SK-N-SH (cell line): ENCODE measurements at regions of chr1 and their contacts with region 1.

Region 1: DNA sequence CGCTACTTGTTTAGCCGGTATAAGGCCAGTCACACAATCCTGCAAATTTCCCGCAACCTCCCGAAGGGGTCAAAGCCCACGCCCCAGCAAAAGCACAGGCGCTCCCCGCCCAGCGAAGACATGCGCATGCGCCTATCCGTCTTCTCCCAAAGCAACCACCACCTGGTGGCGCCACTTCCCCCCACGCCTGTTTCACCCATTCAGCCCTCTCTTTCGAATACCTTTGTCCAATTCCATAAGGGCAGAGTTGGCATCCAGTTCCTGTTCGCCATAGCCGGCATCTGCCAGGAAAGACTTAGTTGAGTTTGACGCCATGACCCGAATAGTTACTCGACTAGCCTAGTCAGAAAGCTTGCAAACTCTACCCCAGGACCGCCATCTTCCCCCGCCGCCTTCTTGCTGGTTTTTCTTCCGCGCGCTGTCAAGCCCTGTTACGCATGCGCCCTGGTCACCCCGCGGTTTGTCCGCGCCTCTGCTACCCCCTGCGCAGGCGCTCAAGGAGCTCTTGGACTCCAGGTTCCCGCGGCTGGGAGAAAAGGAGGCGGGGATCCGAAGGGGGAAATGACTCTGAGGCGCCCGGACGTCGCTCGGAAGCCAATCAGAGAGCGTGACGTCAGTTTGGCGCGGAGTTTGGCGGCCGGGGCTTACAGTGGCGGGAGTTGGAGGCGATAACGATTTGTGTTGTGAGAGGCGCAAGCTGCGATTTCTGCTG is at the starts of genes DTL and INTS7:
- DNase-seq: peak; percentile 94
- H3K4me3 ChIP-seq: peak within 1 kb of the TSS; percentile 89 to 99
- H3K27ac ChIP-seq: peak within 1 kb of the TSS; percentile 81 to 93
- H3K4me1 ChIP-seq: peaks cover 18 to 22% of the 10 kb centered on the region in 2 experiments; a peak in 3 of 4 replicates
- H3K27me3 ChIP-seq: no peaks in the 10 kb centered on the region
- CTCF ChIP-seq: peak; percentile 92
- EP300 ChIP-seq: peak in 1 of 2 experiments; percentile 27; a peak in 1 of 4 replicates
- RAD21 ChIP-seq: no peak
- polyA plus RNA-seq, gene DTL: 9.3 and 12.6 TPM in 2 replicates
- polyA plus RNA-seq, gene INTS7: 8.7 and 11.7 TPM in 2 replicates

Region 2: GRCh38 chr1:211680752-211681327 is 354.4 kb before region 1 on chr1:
- CTCF ChIA-PET with region 1: interaction called, 85 read pairs
- POLR2A ChIA-PET with region 1: interaction called, 5 read pairs
- DNase-seq: peak; percentile 83
- H3K4me3 ChIP-seq: no peak overlapping the region
- H3K27ac ChIP-seq: peak overlapping the region in 1 of 2 experiments; percentile 36; a peak in 1 of 4 replicates
- H3K4me1 ChIP-seq: peaks cover 0 to 2% of the 10 kb centered on the region in 2 experiments; a peak in 3 of 4 replicates
- H3K27me3 ChIP-seq: no peaks in the 10 kb centered on the region
- CTCF ChIP-seq: peak; percentile 74
- EP300 ChIP-seq: no peak
- RAD21 ChIP-seq: peak; percentile 95

Region 3: DNA sequence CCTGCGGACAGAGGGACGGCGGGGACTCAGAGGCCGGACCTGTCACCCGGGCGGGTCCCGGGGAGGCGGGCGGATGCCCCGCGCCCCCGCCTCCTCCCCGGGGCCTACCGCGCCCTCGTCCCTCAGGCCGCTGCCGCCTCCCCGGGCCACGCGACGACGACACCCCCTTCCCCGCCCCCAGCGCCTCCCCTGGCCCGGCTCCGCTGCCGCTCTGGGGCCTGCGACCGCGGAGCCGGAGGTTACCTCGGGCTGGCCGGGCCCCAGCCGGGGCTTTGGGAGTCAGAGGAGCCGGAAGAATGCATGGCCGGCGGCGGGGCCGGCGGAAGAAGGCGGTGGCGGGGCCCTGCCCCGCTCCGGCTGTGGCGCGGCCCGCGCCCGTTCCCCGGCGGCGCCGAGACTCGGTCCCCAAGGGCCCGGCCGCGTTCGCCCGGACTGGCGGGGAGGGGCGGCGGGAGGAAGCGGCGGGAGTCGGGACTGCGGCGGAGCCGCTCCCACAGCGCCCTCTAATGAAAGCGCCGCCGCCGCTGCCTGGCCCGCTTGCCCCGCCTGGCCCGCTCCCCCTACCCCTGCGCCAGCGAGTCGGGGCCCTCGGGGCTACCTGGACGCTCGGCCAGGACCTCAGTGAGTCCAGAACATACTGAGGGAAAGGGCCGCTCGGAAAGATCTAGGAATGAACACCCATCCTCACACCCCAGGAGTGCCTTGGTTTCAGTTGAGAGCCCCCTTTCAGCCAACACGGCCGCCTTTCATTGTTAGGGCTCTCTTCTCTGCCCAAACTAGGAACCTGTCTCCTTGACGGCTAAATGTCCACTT is 204.7 kb before region 1 on chr1 and contains the start of gene LPGAT1:
- CTCF ChIA-PET with region 1: interaction called, 11 read pairs
- POLR2A ChIA-PET with region 1: no interaction called
- DNase-seq: peak; percentile 93
- H3K4me3 ChIP-seq: peak within 1 kb of the TSS; percentile 64 to 79
- H3K27ac ChIP-seq: peak within 1 kb of the TSS; percentile 28 to 82; a peak in 3 of 4 replicates
- H3K4me1 ChIP-seq: peaks cover 8 to 24% of the 10 kb centered on the region in 2 experiments; a peak in 3 of 4 replicates
- H3K27me3 ChIP-seq: no peaks in the 10 kb centered on the region
- CTCF ChIP-seq: peak; percentile 58
- EP300 ChIP-seq: no peak
- RAD21 ChIP-seq: peak; percentile 47
- polyA plus RNA-seq, gene LPGAT1: 4.8 and 6.3 TPM in 2 replicates

Region 4: GRCh38 chr1:212021563-212021962 is 13.7 kb before region 1 on chr1:
- CTCF ChIA-PET with region 1: interaction called, 45 read pairs
- POLR2A ChIA-PET with region 1: no interaction called
- DNase-seq: no peak
- H3K4me3 ChIP-seq: no peak overlapping the region
- H3K27ac ChIP-seq: no peak overlapping the region
- H3K4me1 ChIP-seq: peaks cover 0 to 2% of the 10 kb centered on the region in 2 experiments; a peak in 1 of 4 replicates
- H3K27me3 ChIP-seq: no peaks in the 10 kb centered on the region
- CTCF ChIP-seq: no peak
- EP300 ChIP-seq: no peak
- RAD21 ChIP-seq: no peak

Region 5: DNA sequence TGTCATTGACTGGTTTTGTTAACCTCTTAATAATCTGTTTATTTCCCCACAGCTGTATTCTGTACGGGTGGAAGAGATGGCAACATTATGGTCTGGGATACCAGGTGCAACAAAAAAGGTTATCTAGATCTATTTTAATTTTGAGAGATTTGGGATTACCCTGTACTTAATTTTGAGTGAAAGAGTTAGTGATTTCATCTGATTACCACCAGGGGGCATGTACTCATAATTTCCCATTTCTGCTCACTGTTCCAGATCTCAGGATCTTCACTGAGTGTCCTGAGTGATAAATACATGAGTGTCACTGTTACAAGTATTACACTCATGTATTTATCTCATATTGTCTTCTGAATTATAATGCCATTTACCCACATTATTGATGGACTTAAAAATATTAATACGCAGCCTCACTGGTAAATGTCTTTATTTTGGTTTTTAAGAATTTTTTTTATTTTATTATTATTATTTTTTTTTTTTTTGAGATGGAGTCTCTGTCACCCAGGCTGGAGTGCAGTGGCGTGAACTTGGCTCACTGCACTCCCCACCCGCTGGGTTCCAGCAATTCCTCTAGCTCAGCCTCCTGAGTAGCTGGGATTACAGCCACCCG is 27.7 kb after region 1 on chr1:
- CTCF ChIA-PET with region 1: interaction called, 15 read pairs
- POLR2A ChIA-PET with region 1: no interaction called
- DNase-seq: peak; percentile 46
- H3K4me3 ChIP-seq: no peak overlapping the region
- H3K27ac ChIP-seq: no peak overlapping the region
- H3K4me1 ChIP-seq: no peaks in the 10 kb centered on the region
- H3K27me3 ChIP-seq: no peaks in the 10 kb centered on the region
- CTCF ChIP-seq: peak; percentile 79
- EP300 ChIP-seq: no peak
- RAD21 ChIP-seq: peak; percentile 67